MCF 10A (cell line): ENCODE measurements at regions of chr2 and their contacts with region 1.

Region 1: GRCh38 chr2:85538486-85539360 is at the start of gene MAT2A:
- DNase-seq: peak; percentile 90
- H3K4me3 Mint-ChIP-seq: peak within 1 kb of the TSS; percentile 98
- H3K27ac Mint-ChIP-seq: peak within 1 kb of the TSS; percentile 96
- H3K4me1 Mint-ChIP-seq: peaks cover 52% of the 10 kb centered on the region
- H3K27me3 Mint-ChIP-seq: no peaks in the 10 kb centered on the region
- CTCF ChIP-seq: peak; percentile 25
- total RNA-seq, gene MAT2A: 348 and 366 TPM in 2 replicates

Region 2: GRCh38 chr2:85354286-85355072 is 184.2 kb before region 1 on chr2 and contains the starts of genes ELMOD3 and RETSAT:
- CTCF ChIA-PET with region 1: no interaction called
- POLR2A ChIA-PET with region 1: interaction called, 36 read pairs
- intact Hi-C with region 1: no loop called
- DNase-seq: peak; percentile 100
- H3K4me3 Mint-ChIP-seq: peak within 1 kb of the TSS; percentile 97
- H3K27ac Mint-ChIP-seq: peak within 1 kb of the TSS; percentile 98
- H3K4me1 Mint-ChIP-seq: peaks cover 10% of the 10 kb centered on the region
- H3K27me3 Mint-ChIP-seq: no peaks in the 10 kb centered on the region
- CTCF ChIP-seq: no peak
- total RNA-seq, gene ELMOD3: 16.2 and 16.7 TPM in 2 replicates
- total RNA-seq, gene RETSAT: 59.2 and 60.4 TPM in 2 replicates

Region 3: DNA sequence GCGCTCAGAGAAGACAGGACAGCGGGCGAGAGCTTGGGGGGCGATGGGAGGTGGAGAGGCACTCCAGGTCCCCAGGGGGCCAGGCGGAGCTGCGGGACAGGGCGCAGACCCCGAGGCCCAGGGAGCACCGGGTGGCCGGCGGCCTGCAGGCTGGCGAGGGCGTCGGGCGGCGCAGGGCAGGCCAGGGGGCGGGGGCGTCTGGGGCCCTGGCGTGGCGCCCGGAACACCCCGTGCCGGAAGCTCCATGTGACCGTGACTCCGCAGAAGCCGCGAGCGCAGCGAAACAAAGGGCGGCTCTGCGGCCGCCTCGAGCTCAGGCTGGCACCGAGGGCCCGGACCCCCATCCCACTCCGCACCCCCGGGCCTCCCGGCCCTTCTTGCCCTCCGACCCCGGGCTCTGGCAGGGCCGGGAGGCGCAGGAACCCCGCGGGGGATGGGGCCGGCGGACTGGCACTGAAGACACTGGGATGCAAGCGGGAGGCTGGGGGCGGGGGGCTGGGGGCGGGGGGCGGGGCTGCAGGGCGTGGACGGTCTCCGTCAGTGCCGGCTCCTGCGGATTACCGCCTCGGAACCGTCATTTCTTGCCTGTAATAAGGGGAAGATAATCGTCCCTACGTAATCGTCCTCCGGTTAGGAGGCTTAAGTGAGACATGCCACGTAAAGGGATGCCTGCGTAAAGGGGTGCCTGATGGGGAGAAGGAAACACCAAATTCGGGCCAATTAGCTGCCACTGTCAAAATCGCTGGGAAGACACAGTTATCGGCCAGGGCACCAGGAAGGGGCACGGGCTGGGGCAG is 101.0 kb before region 1 on chr2:
- CTCF ChIA-PET with region 1: interaction called, 5 read pairs
- POLR2A ChIA-PET with region 1: interaction called, 287 read pairs
- intact Hi-C with region 1: no loop called
- DNase-seq: peak; percentile 90
- H3K4me3 Mint-ChIP-seq: peak overlapping the region; percentile 71
- H3K27ac Mint-ChIP-seq: peak overlapping the region; percentile 77
- H3K4me1 Mint-ChIP-seq: peaks cover 31% of the 10 kb centered on the region
- H3K27me3 Mint-ChIP-seq: no peaks in the 10 kb centered on the region
- CTCF ChIP-seq: no peak

Region 4: GRCh38 chr2:85504778-85505323 is 33.9 kb before region 1 on chr2:
- CTCF ChIA-PET with region 1: interaction called, 5 read pairs
- POLR2A ChIA-PET with region 1: interaction called, 376 read pairs
- intact Hi-C with region 1: loop called (anchors 1 kb)
- DNase-seq: peak; percentile 98
- H3K4me3 Mint-ChIP-seq: peak overlapping the region; percentile 21
- H3K27ac Mint-ChIP-seq: peak overlapping the region; percentile 55
- H3K4me1 Mint-ChIP-seq: peaks cover 30% of the 10 kb centered on the region
- H3K27me3 Mint-ChIP-seq: no peaks in the 10 kb centered on the region
- CTCF ChIP-seq: no peak

Region 5: GRCh38 chr2:85561317-85561979 is 22.7 kb after region 1 on chr2 and contains the start of gene GGCX:
- CTCF ChIA-PET with region 1: interaction called, 8 read pairs
- POLR2A ChIA-PET with region 1: interaction called, 21 read pairs
- intact Hi-C with region 1: no loop called
- DNase-seq: peak; percentile 93
- H3K4me3 Mint-ChIP-seq: peak within 1 kb of the TSS; percentile 97
- H3K27ac Mint-ChIP-seq: peak within 1 kb of the TSS; percentile 93
- H3K4me1 Mint-ChIP-seq: peaks cover 6% of the 10 kb centered on the region
- H3K27me3 Mint-ChIP-seq: no peaks in the 10 kb centered on the region
- CTCF ChIP-seq: no peak
- total RNA-seq, gene GGCX: 49.1 and 52.2 TPM in 2 replicates

Region 6: DNA sequence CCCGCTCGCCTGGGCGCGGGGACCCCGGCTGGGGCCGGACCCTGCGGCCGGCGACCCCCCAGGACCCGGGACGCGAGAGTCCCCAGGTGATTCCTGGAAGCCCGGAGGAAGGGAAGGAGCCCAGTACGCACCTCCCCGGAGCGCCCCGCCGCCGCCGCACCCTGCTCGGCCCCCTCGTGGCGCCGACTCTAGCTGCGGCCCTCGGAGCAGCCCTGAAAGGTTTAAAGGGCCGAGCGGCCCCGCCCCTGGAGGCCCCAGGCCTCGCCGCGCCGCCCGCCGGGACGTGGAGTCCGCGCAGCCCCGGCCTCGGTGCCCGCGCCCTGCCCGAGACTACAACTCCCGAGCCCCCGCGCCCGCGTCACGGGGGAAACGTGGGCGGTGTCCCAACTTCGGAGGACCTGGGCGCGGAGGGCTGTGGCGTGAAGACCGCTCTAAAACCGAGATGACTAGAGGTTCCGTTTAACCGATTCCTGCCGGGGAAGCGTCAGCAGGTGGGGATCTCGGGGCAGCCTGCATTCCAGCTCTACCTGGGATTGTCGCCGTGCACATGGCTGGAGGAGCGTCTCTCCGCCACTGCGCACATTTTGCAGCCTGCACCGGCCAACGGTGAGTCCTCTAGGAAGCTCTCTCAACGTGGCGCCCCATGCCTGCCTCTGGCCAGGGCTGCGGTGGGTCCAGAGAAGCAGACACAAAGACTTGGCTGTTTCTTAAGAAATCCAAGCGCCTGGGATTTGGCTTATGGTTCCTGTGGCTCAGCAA is 63.9 kb after region 1 on chr2 and contains the start of gene TMEM150A:
- CTCF ChIA-PET with region 1: no interaction called
- POLR2A ChIA-PET with region 1: interaction called, 22 read pairs
- intact Hi-C with region 1: no loop called
- DNase-seq: peak; percentile 90
- H3K4me3 Mint-ChIP-seq: peak within 1 kb of the TSS; percentile 79
- H3K27ac Mint-ChIP-seq: peak within 1 kb of the TSS; percentile 70
- H3K4me1 Mint-ChIP-seq: peaks cover 12% of the 10 kb centered on the region
- H3K27me3 Mint-ChIP-seq: no peaks in the 10 kb centered on the region
- CTCF ChIP-seq: peak; percentile 30
- total RNA-seq, gene TMEM150A: 12.5 and 14.5 TPM in 2 replicates